Posterior vena cava (tissue), 2 donors: ENCODE measurements at regions of chr1 and their contacts with region 1.

Region 1: GRCh38 chr1:62508187-62508758 is 71.4 kb downstream of the USP1 start:
- DNase-seq: no peak

Region 2: DNA sequence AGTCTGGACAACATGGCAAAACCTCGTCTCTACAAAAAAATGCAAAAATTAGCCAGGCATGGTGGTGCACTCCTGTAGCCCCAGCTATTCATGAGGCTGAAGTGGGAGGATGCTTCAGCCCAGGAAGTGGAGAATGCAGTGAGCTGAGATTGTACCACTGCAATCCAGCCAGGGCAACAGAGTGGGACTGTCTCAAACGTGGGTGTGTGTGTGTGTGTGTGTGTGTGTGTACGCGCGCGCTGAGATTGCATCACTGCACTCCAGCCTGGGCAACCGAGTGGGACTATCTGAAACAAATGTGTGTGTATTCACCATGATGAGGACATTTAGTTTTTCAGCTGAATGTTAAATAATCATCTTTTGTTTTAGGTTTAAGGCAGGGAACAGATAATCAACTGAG is 50.3 kb before region 1 on chr1:
- intact Hi-C with region 1: loop called in 1 of 2 experiments (anchors 2 kb)
- DNase-seq: no peak

Region 3: GRCh38 chr1:62539028-62539447 is 30.8 kb after region 1 on chr1:
- intact Hi-C with region 1: loop called in 1 of 2 experiments (anchors 2 kb)
- DNase-seq: no peak

Region 4: DNA sequence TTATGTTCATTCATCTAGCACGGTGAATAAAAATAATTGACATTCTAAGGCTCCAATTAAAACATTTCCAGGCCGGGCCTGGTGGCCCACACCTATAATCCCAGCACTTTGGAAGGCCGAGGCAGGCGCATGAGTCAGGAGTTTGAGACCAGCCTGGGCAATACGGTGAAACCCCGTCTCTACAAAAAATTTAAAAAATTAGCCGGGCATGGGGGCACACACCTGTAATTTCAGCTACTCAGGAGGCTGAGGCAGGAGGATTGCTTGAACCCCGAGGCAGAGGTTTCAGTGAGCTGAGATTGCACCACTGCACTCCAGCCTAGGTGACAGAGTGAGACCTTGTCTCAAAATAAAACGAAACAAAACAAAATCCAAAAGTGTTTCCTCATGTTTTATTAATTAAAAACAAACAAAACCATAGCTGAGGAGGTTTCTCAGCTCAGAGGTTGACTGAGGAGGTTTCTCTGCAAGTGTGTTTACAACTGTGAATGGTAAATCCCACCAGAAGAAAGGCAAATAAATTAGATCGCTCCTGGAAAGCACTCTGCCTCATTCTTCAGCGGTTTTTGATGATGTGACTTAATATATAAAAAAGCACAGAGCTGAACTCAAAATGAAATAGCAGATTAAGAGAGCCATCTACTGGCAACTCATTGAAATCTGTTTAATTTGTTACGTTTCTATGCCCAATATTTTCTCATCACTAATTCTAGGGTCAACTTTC is 238.0 kb after region 1 on chr1:
- intact Hi-C with region 1: loop called in 1 of 2 experiments (anchors 10 kb)
- DNase-seq: no peak

Region 5: GRCh38 chr1:63487336-63488065 is 979.2 kb after region 1 on chr1:
- intact Hi-C with region 1: no loop called
- DNase-seq: no peak